ENCODE measurements at regions of chr4 and their contacts with region 1.

Region 1: GRCh38 chr4:189792924-189793618 is 147.6 kb upstream of the FRG1 start:
- DNase-seq: peak; percentile 75
- ATAC-seq: peak; percentile 91

Region 2: GRCh38 chr4:189436207-189436606 is 356.9 kb before region 1 on chr4:
- intact Hi-C with region 1: loop called (anchors 2 kb)
- DNase-seq: no peak
- ATAC-seq: no peak

Region 3: DNA sequence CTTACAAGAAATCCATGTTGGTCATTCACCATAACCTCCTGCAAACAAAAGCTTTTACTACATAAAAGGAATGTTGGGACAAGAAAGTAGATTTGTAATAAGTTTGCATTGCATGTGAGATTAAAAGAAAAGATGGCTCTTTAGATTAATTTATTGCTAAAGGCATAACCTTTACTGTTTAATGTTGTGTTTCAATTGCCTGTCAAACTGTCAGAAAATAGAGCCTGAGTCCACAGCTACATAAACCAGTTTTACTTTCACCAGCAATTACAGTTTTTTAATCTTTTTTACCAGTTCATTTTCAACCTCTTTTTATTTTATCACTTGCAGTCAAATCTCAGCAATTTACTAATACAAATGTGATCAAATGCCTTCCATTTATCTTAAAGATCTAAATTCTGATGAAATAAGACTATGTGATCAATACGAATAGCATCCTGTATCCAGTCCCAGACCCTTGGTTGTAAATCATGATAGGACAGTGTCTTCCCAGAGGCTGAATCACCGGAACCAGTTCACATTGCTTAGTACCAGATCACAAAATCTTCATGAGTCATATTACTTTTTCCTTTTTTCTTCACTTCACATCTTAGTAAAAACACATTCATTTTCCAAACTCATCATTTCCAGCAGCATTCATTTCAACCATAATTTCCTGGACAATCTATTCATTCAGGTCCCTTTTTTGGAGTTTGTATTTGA is 52.2 kb after region 1 on chr4:
- intact Hi-C with region 1: no loop called
- DNase-seq: no peak
- ATAC-seq: no peak